ENCODE measurements at regions of chr5 and their contacts with region 1.

Region 1: DNA sequence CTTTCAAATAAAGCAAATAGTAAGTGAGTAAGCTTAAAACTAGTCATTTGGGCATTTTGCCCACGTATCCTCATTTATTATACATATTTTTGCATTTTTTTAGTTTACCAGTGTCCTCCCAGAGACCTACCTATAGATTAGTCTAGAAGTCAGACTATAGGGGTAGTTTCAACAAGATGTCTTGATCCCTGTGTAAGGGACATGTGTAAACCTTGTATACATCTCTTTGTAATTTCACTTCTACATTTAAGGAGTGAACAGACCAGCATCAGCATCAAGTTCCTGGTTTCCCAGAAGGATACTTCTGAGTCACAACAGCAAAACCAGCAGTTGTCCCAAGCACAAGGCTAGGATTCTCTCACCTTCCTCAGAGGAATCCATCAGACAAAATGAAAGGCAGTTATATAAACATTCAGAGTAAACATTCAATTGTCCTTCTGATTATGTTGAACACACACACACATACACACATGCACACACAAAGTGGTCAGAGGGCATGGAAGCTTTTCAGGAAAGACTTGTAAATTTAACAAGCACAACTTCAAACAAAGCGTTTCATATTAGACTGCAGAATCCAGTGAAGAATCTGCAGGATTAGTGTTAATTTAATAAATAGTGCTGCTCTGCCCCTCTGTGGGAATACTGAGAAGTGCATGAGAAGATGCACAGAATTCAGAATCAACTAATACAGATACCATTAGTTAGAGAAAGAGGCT is 55.4 kb downstream of the HINT1 start:
- DNase-seq: peak; percentile 52
- H3K4me3 ChIP-seq: no peak overlapping the region
- H3K27ac ChIP-seq: no peak overlapping the region
- H3K4me1 ChIP-seq: no peaks in the 10 kb centered on the region
- H3K27me3 ChIP-seq: peaks cover 0 to 2% of the 10 kb centered on the region in 2 experiments
- CTCF ChIP-seq: peak; percentile 40 to 57
- POLR2A ChIP-seq: no peak

Region 2: GRCh38 chr5:130871346-130872086 is 238.2 kb before region 1 on chr5:
- CTCF ChIA-PET with region 1: interaction called, 21 read pairs
- POLR2A ChIA-PET with region 1: no interaction called
- dilution Hi-C with region 1: no loop called
- intact Hi-C with region 1: loop called (anchors 1 kb)
- DNase-seq: peak; percentile 36
- H3K4me3 ChIP-seq: no peak overlapping the region
- H3K27ac ChIP-seq: no peak overlapping the region
- H3K4me1 ChIP-seq: no peaks in the 10 kb centered on the region
- H3K27me3 ChIP-seq: no peaks in the 10 kb centered on the region
- CTCF ChIP-seq: peak; percentile 35 to 52
- POLR2A ChIP-seq: no peak

Measured in endothelial cell of umbilical vein (primary cell).